Calu3 (cell line): ENCODE measurements at regions of chr18 and their contacts with region 1.

Region 1: DNA sequence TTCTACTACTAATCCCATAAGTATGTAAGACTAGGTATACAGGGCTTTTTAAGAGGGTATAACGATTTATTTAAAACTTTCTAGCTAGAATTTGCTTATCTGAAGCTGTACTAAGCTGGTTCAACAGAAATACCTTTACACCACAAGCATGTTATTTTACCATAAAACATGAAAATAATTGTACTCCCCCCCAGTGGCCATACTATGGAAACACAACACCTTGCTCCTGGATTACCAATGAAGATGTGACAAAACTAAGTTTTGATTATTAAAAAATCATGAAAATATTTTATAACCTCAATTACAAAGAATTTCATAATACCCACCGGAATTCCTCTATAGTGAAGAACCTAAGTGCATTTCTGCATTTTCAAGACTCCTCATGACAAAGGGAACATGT is 27.3 kb downstream of the LPIN2 start:
- DNase-seq: peak; percentile 34
- H3K4me3 Mint-ChIP-seq: no peak overlapping the region
- H3K27ac Mint-ChIP-seq: no peak overlapping the region
- H3K4me1 Mint-ChIP-seq: peaks cover 52% of the 10 kb centered on the region
- H3K27me3 Mint-ChIP-seq: no peaks in the 10 kb centered on the region
- CTCF ChIP-seq: peak; percentile 33

Region 2: GRCh38 chr18:2758309-2758708 is 227.3 kb before region 1 on chr18:
- CTCF ChIA-PET with region 1: no interaction called
- intact Hi-C with region 1: loop called (anchors 10 kb)
- DNase-seq: no peak
- H3K4me3 Mint-ChIP-seq: no peak overlapping the region
- H3K27ac Mint-ChIP-seq: no peak overlapping the region
- H3K4me1 Mint-ChIP-seq: peaks cover 12% of the 10 kb centered on the region
- H3K27me3 Mint-ChIP-seq: no peaks in the 10 kb centered on the region
- CTCF ChIP-seq: no peak

Region 3: DNA sequence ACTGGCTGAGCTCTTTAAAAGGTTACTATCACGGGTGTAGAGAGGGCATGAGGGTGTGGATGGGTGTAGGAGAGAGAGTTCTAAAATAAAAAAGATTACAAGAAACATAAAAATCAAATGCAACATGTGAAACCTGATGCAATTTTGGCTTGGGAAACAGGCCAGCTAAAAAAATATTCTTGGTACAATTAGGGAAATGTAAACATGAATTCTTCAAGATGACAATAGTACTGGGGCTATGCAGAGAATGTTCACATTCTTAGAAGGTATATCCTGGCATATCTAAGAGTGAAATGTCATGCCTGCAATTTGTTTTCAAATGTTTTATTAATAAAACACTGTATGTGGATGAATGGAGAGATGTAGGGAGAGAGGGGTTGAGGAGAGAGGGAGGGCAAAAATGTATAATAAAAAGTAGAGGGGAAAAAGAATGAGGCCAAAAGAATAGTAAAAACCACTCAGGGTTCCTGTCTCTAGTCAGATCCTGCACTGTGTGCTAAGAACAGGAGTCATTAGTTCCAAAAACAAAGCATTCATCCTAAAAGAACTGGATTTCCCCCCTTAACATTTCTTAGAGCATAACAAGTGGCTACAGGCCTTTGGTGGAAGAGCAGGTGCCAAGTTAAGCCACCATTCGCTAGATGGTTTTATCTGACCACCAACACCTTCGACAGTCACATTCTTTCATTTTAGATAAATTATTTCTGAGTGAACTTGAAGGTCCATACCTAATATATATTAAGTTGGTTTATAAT is 50.0 kb before region 1 on chr18:
- CTCF ChIA-PET with region 1: interaction called, 23 read pairs
- intact Hi-C with region 1: loop called (anchors 2 kb)
- DNase-seq: no peak
- H3K4me3 Mint-ChIP-seq: no peak overlapping the region
- H3K27ac Mint-ChIP-seq: no peak overlapping the region
- H3K4me1 Mint-ChIP-seq: peaks cover 17% of the 10 kb centered on the region
- H3K27me3 Mint-ChIP-seq: no peaks in the 10 kb centered on the region
- CTCF ChIP-seq: no peak

Region 4: DNA sequence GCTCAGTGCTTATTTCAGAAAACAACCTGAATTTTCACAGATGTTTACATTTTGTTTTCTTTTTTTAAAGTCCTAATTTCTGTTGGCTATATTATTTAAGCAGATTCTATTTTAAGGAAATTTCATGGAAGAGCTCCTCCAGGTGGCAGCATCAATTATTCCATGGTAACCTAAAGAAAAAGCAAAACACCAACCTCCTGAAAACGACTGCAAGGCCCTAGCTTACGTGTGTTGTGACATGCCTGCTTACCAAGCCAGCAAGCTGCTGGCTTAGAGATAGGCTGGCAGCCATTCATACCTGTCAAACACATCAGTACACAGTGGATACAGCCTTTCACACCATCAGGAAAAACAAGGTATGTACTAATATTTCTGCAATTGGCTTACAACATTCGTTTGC is 37.6 kb before region 1 on chr18:
- CTCF ChIA-PET with region 1: interaction called, 11 read pairs
- intact Hi-C with region 1: no loop called
- DNase-seq: peak; percentile 4
- H3K4me3 Mint-ChIP-seq: no peak overlapping the region
- H3K27ac Mint-ChIP-seq: no peak overlapping the region
- H3K4me1 Mint-ChIP-seq: no peaks in the 10 kb centered on the region
- H3K27me3 Mint-ChIP-seq: no peaks in the 10 kb centered on the region
- CTCF ChIP-seq: no peak